Calu3 (cell line): ENCODE measurements at regions of chr1 and their contacts with region 1.

Region 1: DNA sequence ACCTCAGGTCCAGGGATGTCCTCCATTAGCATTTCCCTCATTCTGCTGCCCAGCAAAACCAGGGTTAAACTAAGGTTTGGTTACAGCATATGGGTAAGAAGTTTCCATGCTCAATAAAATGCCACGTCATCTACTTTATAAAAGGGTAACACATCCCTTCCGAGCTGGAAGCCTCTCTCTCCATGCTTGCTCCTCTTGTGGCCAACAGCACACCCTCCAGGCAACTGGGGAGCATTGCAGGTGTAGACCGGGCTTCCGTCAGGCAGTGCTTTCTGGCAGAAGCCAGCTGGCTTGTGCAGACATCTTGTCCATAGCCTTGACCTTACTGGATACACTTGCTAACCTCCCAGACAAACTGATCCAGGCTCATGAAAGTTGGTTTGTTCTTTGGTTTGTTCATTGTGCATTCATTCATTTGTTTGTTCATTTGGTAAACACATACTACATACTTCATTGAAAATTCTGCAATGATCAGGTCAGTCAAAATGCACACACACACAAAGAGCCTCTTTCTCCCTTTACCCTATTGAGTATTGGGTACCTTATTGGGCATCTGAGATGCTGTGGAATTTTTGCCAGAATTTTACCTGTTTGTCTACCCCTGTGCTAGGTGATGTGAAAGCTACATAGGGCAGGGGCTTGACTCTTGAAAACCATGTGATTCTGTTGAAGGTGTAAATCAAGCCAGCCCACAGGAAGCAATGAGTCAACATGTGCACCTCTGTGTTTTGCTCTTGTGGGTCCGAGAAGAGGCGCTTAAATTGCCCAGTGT is 422.8 kb downstream of the CAMTA1 start:
- DNase-seq: peak; percentile 73
- H3K4me3 Mint-ChIP-seq: no peak overlapping the region
- H3K27ac Mint-ChIP-seq: no peak overlapping the region
- H3K4me1 Mint-ChIP-seq: peaks cover 7% of the 10 kb centered on the region
- H3K27me3 Mint-ChIP-seq: peaks cover 48% of the 10 kb centered on the region
- CTCF ChIP-seq: peak; percentile 64

Region 2: GRCh38 chr1:7042322-7043190 is 165.5 kb before region 1 on chr1:
- CTCF ChIA-PET with region 1: interaction called, 36 read pairs
- intact Hi-C with region 1: loop called (anchors 2 kb)
- DNase-seq: no peak
- H3K4me3 Mint-ChIP-seq: no peak overlapping the region
- H3K27ac Mint-ChIP-seq: no peak overlapping the region
- H3K4me1 Mint-ChIP-seq: no peaks in the 10 kb centered on the region
- H3K27me3 Mint-ChIP-seq: peaks cover 46% of the 10 kb centered on the region
- CTCF ChIP-seq: no peak